BJ (cell line): ENCODE measurements at regions of chr6 and their contacts with region 1.

Region 1: GRCh38 chr6:31079656-31080261 is 32.6 kb downstream of the C6orf15 start:
- DNase-seq: no peak
- H3K4me3 ChIP-seq: no peak overlapping the region
- H3K27me3 ChIP-seq: no peaks in the 10 kb centered on the region
- CTCF ChIP-seq: peak; percentile 87

Region 2: DNA sequence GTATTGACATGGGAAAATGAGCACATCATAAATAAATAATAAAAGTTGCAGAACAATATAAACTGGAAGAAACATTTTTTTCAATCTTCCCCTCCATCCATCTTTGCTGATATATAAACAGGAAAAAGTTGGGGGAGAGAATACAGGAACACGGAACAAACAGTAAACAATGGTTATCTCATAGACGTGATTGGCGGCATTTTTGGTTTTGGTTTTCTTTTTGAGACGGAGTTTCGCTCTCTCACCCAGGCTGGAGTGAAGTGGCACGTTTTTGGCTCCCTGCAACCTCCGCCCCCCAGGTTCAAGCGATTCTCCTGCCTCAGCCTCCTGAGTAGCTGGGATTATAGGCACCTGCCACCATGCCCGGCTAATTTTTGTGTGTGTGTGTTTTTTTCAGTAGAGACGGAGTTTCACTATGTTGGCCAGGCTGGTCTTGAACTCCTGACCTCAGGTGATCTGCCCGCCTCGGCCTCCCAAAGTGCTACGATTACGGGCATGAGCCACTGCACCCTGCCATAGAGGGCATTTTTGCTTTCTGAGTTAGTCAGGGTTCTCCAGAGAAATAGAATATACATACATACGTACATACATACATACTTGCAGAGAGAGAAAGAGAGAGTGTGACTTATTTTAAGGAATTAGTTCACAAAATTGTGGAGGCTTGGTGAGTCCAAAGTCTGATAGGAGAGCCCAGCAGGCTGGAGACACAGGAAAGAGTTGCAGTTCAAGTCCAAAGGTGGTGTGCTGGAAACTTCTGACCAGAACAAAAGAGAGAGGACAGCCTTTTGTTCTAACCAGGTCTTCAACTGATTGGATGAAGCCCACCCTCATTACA is 546.1 kb before region 1 on chr6:
- CTCF ChIA-PET with region 1: no interaction called
- POLR2A ChIA-PET with region 1: no interaction called
- DNase-seq: no peak
- H3K4me3 ChIP-seq: no peak overlapping the region
- H3K27me3 ChIP-seq: no peaks in the 10 kb centered on the region
- CTCF ChIP-seq: no peak

Region 3: GRCh38 chr6:30828027-30828960 is 251.5 kb before region 1 on chr6:
- CTCF ChIA-PET with region 1: interaction called, 29 read pairs
- POLR2A ChIA-PET with region 1: no interaction called
- DNase-seq: peak; percentile 69
- H3K4me3 ChIP-seq: no peak overlapping the region
- H3K27me3 ChIP-seq: no peaks in the 10 kb centered on the region
- CTCF ChIP-seq: peak; percentile 92

Region 4: DNA sequence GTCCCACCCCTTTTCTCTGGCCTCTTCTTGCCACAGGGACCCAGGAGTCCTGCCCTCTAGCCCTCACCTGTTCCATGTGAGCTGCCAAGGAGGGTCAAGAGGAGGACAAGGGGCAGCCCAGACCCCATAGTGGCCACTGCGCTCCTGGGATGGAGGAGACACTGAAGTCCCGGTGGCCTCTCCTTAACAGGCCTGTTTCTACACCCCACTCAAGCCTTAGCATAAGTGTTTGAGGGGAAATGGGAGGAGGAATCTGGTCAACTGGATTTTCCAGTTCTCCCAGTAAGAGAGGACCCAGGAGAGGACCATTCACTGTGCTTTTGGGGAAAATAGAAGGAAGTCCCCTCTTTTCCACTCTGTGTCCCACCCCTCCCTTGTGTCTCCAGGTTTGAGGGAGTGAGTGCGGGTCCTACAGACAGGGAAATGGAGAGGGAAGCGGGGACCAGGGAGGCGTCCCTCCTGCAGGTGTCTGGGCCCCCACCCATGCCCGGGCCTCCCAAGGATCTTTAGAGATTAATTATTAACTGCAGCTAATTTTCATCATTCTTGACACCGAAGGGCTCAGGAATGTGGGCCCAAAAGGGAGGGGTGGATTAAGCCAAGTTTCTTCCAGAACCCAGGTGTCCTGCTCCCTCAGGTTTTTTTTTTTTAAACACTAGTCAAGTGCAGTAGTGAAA is 147.7 kb before region 1 on chr6 and contains the start of gene SFTA2:
- CTCF ChIA-PET with region 1: interaction called, 12 read pairs
- POLR2A ChIA-PET with region 1: no interaction called
- DNase-seq: no peak
- H3K4me3 ChIP-seq: no peak within 1 kb of the TSS
- H3K27me3 ChIP-seq: no peaks in the 10 kb centered on the region; the same call in 1 of the 2 replicates
- CTCF ChIP-seq: no peak
- polyA plus RNA-seq, gene SFTA2: not detected in 2 replicates

Region 5: DNA sequence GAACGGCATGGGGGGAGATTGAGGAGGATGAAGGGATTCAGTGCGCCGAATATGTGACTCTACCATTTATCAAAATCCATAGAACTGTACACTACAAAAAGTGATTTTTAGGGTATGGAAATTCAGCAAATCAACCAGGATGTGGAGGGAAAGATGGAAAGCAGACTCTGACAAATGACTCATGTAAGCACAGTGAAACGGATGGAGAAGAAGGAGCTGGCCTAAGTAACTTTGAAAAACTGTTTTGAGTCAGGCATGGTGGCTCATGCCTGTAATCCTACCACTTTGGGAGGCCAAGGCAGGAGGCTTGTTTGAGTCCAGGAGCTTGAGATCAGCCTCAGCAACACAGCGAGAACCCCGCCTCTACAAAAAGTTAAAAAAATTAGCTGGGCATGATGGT is 30.2 kb before region 1 on chr6:
- CTCF ChIA-PET with region 1: interaction called, 15 read pairs
- POLR2A ChIA-PET with region 1: no interaction called
- DNase-seq: no peak
- H3K4me3 ChIP-seq: no peak overlapping the region
- H3K27me3 ChIP-seq: peaks cover 3% of the 10 kb centered on the region
- CTCF ChIP-seq: no peak

Region 6: GRCh38 chr6:31068669-31069340 is 11.0 kb before region 1 on chr6:
- CTCF ChIA-PET with region 1: interaction called, 49 read pairs
- POLR2A ChIA-PET with region 1: no interaction called
- DNase-seq: no peak
- H3K4me3 ChIP-seq: no peak overlapping the region
- H3K27me3 ChIP-seq: peaks cover 3% of the 10 kb centered on the region; the same call in 1 of the 2 replicates
- CTCF ChIP-seq: peak; percentile 92

Region 7: DNA sequence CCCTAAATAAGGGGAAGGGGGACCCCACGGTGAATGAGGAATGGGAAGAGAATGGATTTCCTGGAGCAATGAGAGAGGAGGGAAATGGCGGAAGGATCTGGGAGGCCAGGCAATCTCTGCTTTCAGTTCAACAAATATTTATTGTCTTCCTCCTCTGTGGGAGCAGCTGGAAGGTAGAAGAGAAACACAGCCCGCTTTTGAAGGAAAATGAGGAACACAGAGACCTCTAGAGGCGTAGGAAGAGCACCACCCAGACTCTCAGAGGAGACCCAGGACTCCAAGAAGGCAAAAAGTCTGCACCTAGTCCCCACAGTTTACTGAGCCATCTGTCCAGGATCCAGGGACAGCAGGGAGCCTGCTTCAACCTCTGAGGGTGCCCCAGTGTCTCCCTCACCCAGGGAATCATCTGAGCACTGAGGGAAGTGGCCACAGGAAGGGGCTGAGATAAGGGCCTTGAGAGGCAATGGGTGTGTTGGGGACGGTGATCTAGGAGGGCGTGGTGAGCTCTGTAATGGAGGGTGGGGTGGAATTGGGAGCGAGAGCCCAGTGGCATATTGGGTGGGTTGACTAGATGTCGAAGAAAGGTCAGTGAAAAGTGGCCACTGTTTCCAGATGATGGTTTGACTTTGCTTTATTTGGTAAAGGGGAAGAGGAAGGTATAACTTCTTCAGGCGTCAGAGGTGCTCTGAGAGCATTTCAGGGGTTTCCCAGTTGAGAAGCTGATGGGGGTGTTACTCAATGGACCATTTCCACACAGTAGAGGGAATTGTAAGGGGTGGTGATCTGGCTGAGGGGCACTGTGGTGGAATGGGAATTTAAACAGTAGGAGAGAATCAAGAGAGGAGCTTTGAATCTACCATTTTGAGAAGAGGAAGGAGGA is 35.5 kb after region 1 on chr6:
- CTCF ChIA-PET with region 1: interaction called, 15 read pairs
- POLR2A ChIA-PET with region 1: no interaction called
- DNase-seq: no peak
- H3K4me3 ChIP-seq: peak overlapping the region; percentile 36
- H3K27me3 ChIP-seq: 0 out of 2 replicates have a peak, but pooled peaks cover 2% of the 10 kb centered on the region
- CTCF ChIP-seq: peak; percentile 52

Region 8: GRCh38 chr6:31144296-31144969 is 64.7 kb after region 1 on chr6:
- CTCF ChIA-PET with region 1: no interaction called
- POLR2A ChIA-PET with region 1: no interaction called
- DNase-seq: no peak
- H3K4me3 ChIP-seq: no peak overlapping the region
- H3K27me3 ChIP-seq: no peaks in the 10 kb centered on the region
- CTCF ChIP-seq: no peak